Activated T-helper 2 cell treated with anti-CD3 and anti-CD28 coated beads, Interferon-gamma antibody, Interleukin-2, Interleukin-4, amounts not matched to agents 10 μg/mL and 5 μg/mL and 100 μg/mL, durations not matched to agents 14 hours and 24 hours and 36 hours (primary cell): ENCODE measurements at regions of chr6 and their contacts with region 1.

Region 1: DNA sequence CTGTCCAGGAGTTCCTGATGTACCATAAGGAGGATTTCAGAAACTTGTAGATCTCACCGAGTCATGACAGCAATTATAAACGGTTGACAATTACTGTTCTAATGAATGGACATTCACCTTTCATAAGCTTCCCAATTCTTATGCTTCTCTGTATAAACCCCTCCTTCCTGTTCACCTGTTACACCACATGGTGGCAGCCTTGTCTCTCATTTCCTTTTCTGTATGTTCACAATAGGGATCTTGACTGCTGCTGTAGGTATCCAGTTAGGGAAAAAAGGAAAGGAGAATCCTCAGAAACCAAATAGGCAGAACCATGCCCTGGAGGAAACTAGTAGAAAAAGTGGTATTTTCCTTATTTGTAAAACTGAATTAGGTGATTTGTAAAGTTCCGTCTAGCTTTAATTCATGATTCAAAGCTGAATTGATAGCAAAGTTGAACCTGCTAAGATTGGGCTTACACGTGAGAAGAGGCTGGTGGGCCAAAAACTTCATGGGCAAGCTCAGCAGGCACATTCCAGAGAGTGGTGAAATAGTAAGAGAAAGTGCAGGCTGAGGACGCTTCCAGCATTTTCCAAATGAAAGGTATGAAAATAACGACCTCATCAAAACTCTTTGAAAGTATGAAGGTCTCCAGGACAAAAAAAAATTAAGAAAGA is 29.0 kb upstream of the TBPL1 start:
- DNase-seq: peak; percentile 31
- H3K4me3 Mint-ChIP-seq: no peak overlapping the region
- H3K27ac Mint-ChIP-seq: no peak overlapping the region
- H3K4me1 Mint-ChIP-seq: no peaks in the 10 kb centered on the region
- H3K27me3 Mint-ChIP-seq: peaks cover 36% of the 10 kb centered on the region

Region 2: DNA sequence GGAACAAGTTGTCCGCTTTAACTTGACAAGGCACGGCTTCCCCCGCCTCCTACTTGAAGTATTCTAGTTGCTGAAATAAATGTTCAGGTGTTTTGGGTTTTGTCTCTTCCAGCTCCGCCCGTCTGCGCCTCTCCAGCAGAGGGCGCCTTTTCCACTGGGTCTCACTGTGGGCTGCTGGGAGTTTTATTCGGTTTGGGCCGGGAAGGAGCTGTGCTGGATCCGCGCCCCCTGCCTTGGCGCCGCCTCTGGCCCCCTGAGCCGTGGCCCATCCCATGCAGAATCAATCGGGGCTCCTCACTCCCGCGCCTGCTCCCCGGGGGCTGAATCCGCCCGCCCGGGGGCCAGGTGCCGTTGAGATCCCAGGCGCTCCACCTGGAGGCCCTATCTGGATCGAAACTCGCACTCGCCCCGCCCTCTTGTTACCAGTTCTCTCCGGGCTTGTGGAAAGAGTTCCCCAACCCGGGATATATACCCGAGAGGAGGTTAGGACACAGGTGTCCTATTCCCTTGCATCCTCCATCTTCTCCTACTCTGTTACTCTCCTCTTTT is 86.2 kb before region 1 on chr6:
- intact Hi-C with region 1: loop called (anchors 1 kb)
- DNase-seq: peak; percentile 48
- H3K4me3 Mint-ChIP-seq: peak overlapping the region; percentile 72
- H3K27ac Mint-ChIP-seq: no peak overlapping the region
- H3K4me1 Mint-ChIP-seq: peaks cover 4% of the 10 kb centered on the region
- H3K27me3 Mint-ChIP-seq: peaks cover 11% of the 10 kb centered on the region

Region 3: DNA sequence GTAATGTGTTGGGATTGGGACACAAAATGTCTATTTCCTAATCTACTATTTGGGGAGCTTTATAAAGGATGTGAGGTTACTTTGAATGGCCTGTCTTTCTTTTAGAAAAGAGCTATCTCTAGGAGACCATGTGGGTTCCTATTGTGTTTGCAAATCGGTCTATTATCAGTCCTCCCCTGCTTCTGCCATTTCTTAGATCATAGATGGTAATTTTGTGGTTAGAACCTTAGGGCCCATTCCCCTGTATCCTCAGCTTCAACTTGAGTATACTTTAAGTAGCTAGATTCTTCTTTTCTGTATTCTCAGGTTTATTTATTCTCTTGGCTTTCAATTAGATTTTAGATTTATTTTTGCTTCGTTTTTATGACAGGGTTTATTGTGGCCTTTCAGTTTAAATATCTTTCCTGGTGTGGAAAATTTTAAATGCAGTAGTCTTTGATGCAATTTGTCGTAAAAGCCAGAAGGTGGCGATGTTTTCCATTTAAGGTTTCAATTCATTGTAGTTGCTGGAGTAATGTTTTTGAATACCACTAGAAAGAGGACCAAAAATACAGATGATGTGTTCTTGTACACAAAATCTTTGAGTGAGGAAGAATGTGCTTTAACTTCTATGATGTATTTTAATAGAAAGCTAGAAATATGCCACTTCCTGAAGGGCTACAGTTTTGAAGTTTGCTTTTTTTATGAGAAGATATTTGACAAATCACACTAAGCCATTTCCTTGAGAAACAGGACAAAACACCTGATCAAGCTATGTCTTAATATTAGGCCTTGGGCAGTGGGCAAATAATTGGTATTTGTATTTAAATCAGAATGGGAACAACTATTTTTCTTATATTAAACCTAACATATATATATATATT is 49.3 kb after region 1 on chr6:
- intact Hi-C with region 1: loop called (anchors 5 kb)
- DNase-seq: no peak
- H3K4me3 Mint-ChIP-seq: no peak overlapping the region
- H3K27ac Mint-ChIP-seq: peak overlapping the region; percentile 0
- H3K4me1 Mint-ChIP-seq: peaks cover 16% of the 10 kb centered on the region
- H3K27me3 Mint-ChIP-seq: no peaks in the 10 kb centered on the region

Region 4: GRCh38 chr6:134063966-134064445 is 139.9 kb after region 1 on chr6:
- intact Hi-C with region 1: loop called (anchors 1 kb)
- DNase-seq: peak; percentile 29
- H3K4me3 Mint-ChIP-seq: no peak overlapping the region
- H3K27ac Mint-ChIP-seq: no peak overlapping the region
- H3K4me1 Mint-ChIP-seq: no peaks in the 10 kb centered on the region
- H3K27me3 Mint-ChIP-seq: peaks cover 10% of the 10 kb centered on the region

Region 5: GRCh38 chr6:134097114-134097707 is 173.1 kb after region 1 on chr6:
- intact Hi-C with region 1: loop called (anchors 1 kb)
- DNase-seq: peak; percentile 25
- H3K4me3 Mint-ChIP-seq: no peak overlapping the region
- H3K27ac Mint-ChIP-seq: no peak overlapping the region
- H3K4me1 Mint-ChIP-seq: peaks cover 6% of the 10 kb centered on the region
- H3K27me3 Mint-ChIP-seq: peaks cover 27% of the 10 kb centered on the region